Heart right ventricle (tissue), 16 donors: ENCODE measurements at regions of chr10 and their contacts with region 1.

Region 1: DNA sequence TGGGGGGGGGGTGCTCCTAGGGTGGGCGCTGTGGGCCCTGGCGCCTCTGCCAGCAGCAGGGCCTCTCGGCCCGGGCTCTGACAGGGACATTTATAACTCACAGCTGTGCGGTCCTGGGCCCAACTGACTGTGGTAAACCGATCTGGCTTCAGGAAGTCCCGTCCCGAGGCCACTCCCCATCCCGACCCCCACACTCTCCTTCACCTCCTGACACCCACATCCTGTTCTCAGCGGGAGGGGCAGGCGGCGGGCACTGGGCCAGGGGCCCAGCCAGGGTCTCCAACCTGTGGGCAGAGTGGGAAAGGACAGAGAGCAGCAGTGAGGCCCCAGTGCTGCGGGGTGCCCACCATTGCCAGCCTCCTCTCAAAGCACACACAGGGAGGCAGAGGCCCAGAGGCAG is 69.1 kb downstream of the ZMIZ1 start:
- DNase-seq: peak in 1 of 2 donors; percentile 56
- ATAC-seq: peak; percentile 11 to 44 (median 32)
- H3K4me3 ChIP-seq: peak overlapping the region in 2 of 10 donors; percentile 7 to 11
- H3K27ac ChIP-seq: peak overlapping the region; percentile 73 to 97 (median 92)
- H3K4me1 ChIP-seq: peaks cover 77 to 100% (median 100%) of the 10 kb centered on the region in 9 donors
- H3K27me3 ChIP-seq: no peaks in the 10 kb centered on the region
- CTCF ChIP-seq: no peak

Region 2: GRCh38 chr10:78004215-78005026 is 1133.4 kb before region 1 on chr10:
- intact Hi-C with region 1: no loop called
- DNase-seq: no peak
- ATAC-seq: peak in 7 of 8 donors; percentile 28 to 85 (median 64)
- H3K4me3 ChIP-seq: no peak overlapping the region
- H3K27ac ChIP-seq: no peak overlapping the region
- H3K4me1 ChIP-seq: no peaks in the 10 kb centered on the region
- H3K27me3 ChIP-seq: no peaks in the 10 kb centered on the region
- CTCF ChIP-seq: peak in 8 of 9 donors; percentile 11 to 58 (median 26)

Region 3: DNA sequence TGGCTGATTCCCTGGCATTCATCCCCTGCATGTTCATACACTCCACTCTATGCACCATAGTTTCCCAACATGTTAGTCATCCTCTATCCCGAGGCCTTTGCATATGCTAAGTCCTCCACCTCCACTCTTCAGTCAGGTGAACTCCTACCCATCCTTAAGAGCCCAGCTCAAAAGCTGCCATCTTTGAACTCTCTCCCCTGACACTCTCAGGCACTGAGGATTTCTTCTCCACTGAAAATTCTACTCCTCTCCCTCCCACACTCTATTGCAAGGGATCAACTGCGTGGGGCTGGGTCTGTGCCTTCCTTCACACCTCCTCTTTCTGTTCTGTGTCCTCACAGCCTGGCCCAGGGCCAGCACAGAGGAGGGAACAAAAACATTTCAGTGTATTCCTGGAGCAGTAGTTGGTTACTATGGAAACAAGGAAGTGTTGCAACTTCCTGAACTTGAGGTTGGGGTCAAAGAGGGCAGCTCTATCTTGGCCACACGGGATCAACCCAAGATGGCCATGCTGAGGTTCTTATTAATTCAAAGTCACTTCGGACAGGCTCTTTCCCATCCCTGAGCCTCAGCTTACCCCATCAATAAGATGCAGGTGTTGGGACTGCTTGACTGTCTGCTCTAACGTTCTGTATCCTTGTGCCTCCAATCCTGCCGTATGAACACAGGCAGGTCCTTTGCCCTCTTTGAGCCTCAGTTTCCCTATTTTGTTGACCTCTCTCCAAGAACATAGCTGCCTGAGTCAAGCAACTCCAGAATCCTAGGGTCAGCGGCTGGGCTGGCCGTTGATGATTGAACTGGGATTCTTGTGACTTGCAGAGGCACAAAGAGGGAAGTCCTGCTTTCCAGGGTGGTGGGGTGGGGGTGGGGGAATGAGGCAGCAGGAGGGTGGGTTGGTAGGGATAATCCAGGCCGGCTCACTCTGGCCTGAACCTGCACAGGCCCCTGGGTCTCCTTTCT is 53.5 kb before region 1 on chr10:
- intact Hi-C with region 1: loop called in 3 of 10 experiments (anchors 5 to 10 kb)
- DNase-seq: peak; percentile 93 to 94
- ATAC-seq: peak; percentile 45 to 86 (median 74)
- H3K4me3 ChIP-seq: peak overlapping the region in 1 of 10 donors; percentile 16
- H3K27ac ChIP-seq: peak overlapping the region; percentile 48 to 89 (median 73)
- H3K4me1 ChIP-seq: peaks cover 77 to 100% (median 99%) of the 10 kb centered on the region in 9 donors
- H3K27me3 ChIP-seq: no peaks in the 10 kb centered on the region
- CTCF ChIP-seq: no peak